B cell (primary cell): ENCODE measurements at regions of chr2 and their contacts with region 1.

Region 1: DNA sequence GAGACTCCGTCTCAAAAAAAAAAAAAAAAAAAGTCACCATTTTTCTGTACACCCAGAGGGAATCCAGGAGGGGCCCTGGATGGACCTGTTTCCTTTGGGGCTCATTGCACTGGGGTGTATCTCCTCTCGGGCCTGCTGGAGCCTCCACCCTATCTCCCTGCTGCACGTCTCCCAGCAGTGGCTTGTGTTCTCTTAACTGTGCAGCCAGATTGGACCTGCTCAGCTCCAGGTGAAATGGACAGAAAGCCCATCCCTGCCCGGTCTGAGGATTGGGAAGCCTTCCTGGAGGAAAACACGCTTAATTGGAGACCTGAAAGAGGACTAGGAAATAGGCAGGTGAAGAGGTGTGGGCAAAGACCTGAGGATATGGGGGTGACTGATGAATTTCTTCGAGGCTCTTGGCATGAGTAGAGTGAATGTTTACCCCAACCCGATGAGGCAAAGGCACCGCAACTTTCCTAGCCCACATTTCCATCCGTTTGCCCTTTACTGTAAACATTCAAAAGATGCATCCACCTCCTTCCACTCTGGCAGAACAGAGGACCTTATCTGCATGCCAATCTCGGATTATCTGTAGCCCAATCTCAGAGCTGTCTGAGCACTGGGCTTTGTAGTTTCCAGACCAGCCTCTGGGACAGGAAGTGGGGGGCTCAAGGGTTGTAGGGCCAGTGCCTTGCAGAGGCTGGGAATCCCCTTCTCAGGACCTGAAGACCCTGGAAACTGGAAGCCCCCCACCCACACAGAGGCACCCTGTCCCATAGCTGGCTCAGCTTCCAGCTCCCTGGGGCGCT is 2.6 kb upstream of the ZAP70 start:
- DNase-seq: no peak
- ATAC-seq: no peak
- H3K4me3 ChIP-seq: no peak overlapping the region
- H3K4me3 Mint-ChIP-seq: no peak overlapping the region
- H3K27ac ChIP-seq: no peak overlapping the region
- H3K27ac Mint-ChIP-seq: no peak overlapping the region
- H3K4me1 ChIP-seq: peaks cover 12 to 19% of the 10 kb centered on the region in 2 donors
- H3K4me1 Mint-ChIP-seq: peaks cover 14% of the 10 kb centered on the region
- H3K27me3 ChIP-seq: peaks cover 0 to 6% (median 0%) of the 10 kb centered on the region in 4 experiments
- H3K27me3 Mint-ChIP-seq: peaks cover 8% of the 10 kb centered on the region
- CTCF ChIP-seq: no peak

Region 2: DNA sequence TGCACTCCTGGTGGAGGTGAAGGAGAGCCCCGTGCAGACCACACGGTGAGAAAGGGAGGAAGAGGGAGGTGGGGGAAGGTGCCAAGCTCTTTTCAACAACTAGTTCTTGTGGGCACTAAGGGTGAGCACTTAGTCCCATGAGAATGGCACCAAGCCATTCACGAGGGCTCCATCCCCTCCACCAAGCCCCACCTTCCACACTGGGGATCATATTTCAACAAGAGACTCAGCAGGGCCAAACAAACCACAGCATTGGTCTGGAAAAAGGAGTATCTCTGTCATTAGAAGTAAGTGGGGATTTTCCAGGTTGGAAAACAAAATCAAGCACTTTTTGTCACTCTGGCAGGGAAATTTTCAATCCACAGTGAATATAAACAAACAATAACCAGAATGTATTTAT is 41.0 kb after region 1 on chr2:
- CTCF ChIA-PET with region 1: interaction called, 7 read pairs
- POLR2A ChIA-PET with region 1: no interaction called
- intact Hi-C with region 1: loop called (anchors 1 kb)
- DNase-seq: no peak
- ATAC-seq: no peak
- H3K4me3 ChIP-seq: no peak overlapping the region
- H3K4me3 Mint-ChIP-seq: no peak overlapping the region
- H3K27ac ChIP-seq: no peak overlapping the region
- H3K27ac Mint-ChIP-seq: peak overlapping the region; percentile 62
- H3K4me1 ChIP-seq: peaks cover 10 to 12% of the 10 kb centered on the region in 2 donors
- H3K4me1 Mint-ChIP-seq: peaks cover 17% of the 10 kb centered on the region
- H3K27me3 ChIP-seq: no peaks in the 10 kb centered on the region
- H3K27me3 Mint-ChIP-seq: no peaks in the 10 kb centered on the region
- CTCF ChIP-seq: no peak

Region 3: DNA sequence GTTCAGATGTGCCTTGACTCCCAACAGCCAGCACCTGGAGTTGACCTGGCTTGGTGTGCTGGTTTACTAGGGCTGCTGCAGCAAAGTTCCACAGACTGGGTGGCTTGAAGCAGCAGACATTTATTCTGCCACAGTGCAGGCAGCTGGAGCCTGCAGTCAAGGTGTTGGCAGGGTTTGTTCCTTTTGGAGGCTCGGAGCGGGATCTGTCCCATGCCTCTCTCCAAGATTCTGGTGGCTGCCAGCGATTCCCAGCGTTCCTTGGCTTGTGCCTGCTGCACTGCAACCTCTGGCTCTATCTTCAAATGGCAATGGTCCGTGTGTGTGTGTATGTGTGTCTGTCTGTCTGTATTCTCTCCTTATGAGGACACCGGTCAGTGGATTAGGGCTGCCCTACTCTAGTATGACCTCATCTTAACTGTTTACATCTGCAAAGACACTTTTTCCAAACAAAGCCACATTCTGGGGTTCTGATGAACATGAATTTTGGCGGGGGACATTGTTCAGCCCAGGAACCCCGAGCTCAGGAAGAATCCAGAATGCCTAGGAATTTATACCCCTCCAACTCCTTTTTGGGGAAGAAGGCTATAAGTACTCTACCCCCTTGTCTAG is 329.6 kb after region 1 on chr2:
- CTCF ChIA-PET with region 1: no interaction called
- POLR2A ChIA-PET with region 1: no interaction called
- intact Hi-C with region 1: no loop called
- DNase-seq: no peak
- ATAC-seq: no peak
- H3K4me3 ChIP-seq: no peak overlapping the region
- H3K4me3 Mint-ChIP-seq: no peak overlapping the region
- H3K27ac ChIP-seq: no peak overlapping the region
- H3K27ac Mint-ChIP-seq: peak overlapping the region; percentile 15
- H3K4me1 ChIP-seq: peaks cover 16 to 21% of the 10 kb centered on the region in 2 donors
- H3K4me1 Mint-ChIP-seq: peaks cover 21% of the 10 kb centered on the region
- H3K27me3 ChIP-seq: no peaks in the 10 kb centered on the region
- H3K27me3 Mint-ChIP-seq: no peaks in the 10 kb centered on the region
- CTCF ChIP-seq: no peak

Region 4: DNA sequence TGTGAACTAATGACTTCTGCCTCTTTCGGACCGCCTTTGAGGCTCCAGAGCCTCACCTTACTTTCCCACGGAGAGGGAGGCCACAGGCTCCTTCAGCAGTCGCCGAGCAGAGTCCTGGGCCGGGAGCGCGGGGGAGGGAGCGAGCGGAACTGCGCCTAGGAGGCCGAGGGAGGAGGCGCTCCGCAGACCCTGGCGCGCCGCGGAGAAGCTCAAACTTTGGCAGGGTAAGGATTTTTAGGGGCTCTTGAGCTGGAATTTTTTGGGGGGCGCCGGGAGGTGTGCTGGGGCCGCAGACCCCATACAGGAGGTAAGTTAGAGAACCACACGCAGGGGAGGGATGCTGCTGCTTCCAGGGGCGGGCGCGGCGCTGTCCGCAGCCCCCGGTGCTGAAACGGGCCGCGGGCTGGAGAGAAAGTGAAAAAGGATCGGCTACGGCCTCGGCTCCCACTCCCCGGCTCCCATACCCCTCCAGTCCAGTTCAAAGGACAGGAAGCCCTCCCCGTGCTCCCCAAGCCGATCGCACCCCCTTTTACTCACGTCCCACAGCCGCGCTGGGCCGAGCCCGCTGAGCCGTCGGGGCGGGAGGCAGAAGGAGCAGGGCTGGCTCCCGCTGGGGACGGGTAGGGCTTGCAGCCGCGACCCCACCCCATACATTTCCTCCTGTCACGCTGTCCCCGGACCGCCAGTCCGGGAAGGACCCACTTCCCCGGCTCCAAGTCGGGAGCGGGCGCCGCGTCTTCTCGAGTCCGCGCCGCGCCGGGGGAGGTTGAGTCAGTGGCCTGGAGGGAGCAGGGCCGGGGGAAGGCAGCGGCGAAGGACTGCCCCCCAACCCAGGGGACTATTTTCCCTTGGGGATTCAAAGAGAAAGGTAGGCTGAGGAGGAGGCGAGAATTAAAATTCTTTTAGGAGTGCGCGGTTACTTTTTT is 635.8 kb after region 1 on chr2 and contains the start of gene CNGA3:
- CTCF ChIA-PET with region 1: no interaction called
- POLR2A ChIA-PET with region 1: no interaction called
- intact Hi-C with region 1: no loop called
- DNase-seq: peak; percentile 33
- ATAC-seq: no peak
- H3K4me3 ChIP-seq: no peak within 1 kb of the TSS
- H3K4me3 Mint-ChIP-seq: peak within 1 kb of the TSS; percentile 55
- H3K27ac ChIP-seq: no peak within 1 kb of the TSS
- H3K27ac Mint-ChIP-seq: no peak within 1 kb of the TSS
- H3K4me1 ChIP-seq: peaks cover 25 to 32% of the 10 kb centered on the region in 2 donors
- H3K4me1 Mint-ChIP-seq: peaks cover 16% of the 10 kb centered on the region
- H3K27me3 ChIP-seq: peaks cover 0 to 62% (median 41%) of the 10 kb centered on the region in 4 experiments
- H3K27me3 Mint-ChIP-seq: peaks cover 79% of the 10 kb centered on the region
- CTCF ChIP-seq: no peak
- total RNA-seq, gene CNGA3: not detected in 2 replicates